ENCODE measurements at regions of chr1 and their contacts with region 1.

Region 1: GRCh38 chr1:226626577-226626956 is 78.0 kb downstream of the STUM start:
- DNase-seq: peak; percentile 89
- ATAC-seq: peak; percentile 90
- H3K4me3 Mint-ChIP-seq: peak overlapping the region; percentile 43
- H3K27ac Mint-ChIP-seq: peak overlapping the region; percentile 87
- H3K4me1 Mint-ChIP-seq: peaks cover 28% of the 10 kb centered on the region
- H3K27me3 Mint-ChIP-seq: no peaks in the 10 kb centered on the region
- CTCF ChIP-seq: peak; percentile 99

Region 2: DNA sequence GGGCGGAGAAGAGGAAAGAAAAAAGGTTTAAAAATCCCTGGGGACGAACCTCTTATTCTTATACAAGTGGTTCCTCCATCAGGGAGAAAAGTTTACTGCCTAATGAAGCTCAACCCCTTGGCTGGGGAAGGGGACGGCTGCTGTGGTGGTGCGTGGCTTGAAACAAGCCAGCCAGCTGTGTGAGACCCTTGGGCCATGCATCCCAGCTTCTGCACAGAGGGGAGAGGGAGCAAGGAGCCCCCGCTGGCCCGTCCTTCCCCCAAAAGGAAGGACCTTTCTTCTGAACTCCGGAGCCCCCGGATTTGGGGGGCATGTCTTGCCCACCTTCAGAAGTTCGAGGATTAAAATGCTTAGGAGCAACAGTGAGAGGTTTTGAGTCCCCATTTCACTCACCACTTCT is 10.7 kb before region 1 on chr1:
- CTCF ChIA-PET with region 1: interaction called, 10 read pairs
- POLR2A ChIA-PET with region 1: interaction called, 3 read pairs
- intact Hi-C with region 1: no loop called
- DNase-seq: no peak
- ATAC-seq: no peak
- H3K4me3 Mint-ChIP-seq: no peak overlapping the region
- H3K27ac Mint-ChIP-seq: no peak overlapping the region
- H3K4me1 Mint-ChIP-seq: no peaks in the 10 kb centered on the region
- H3K27me3 Mint-ChIP-seq: no peaks in the 10 kb centered on the region
- CTCF ChIP-seq: no peak

Region 3: DNA sequence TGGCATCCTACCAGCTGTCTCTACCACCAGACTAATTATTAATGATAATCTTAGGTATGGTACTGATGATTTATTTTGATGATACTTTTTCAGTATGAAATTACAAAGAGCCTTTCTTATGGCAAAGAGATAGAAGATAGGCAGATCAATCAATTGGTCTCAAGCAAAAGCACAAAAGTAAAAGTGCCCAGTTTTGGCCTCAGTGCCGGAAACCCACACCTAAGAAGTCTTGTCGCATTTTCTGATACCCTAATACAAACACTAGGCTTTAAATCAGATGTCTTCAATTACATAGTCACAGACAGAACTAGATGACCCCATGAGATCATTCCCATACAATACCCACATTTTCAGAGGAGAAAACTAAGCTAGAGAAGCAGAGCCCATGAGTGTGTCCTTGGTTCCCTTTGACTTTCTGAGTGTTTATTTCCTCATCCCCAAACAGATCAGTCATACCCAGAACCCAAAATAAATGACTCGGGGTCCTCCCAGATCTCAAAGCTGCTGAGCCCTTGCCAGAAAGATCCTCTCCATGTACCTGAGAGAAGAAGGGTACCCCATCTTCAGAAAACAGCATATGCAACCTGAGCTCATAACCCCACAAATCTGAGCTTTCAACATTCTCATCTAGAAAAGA is 104.8 kb after region 1 on chr1:
- CTCF ChIA-PET with region 1: interaction called, 11 read pairs
- POLR2A ChIA-PET with region 1: interaction called, 3 read pairs
- intact Hi-C with region 1: no loop called
- DNase-seq: no peak
- ATAC-seq: no peak
- H3K4me3 Mint-ChIP-seq: peak overlapping the region; percentile 92
- H3K27ac Mint-ChIP-seq: peak overlapping the region; percentile 95
- H3K4me1 Mint-ChIP-seq: peaks cover 67% of the 10 kb centered on the region
- H3K27me3 Mint-ChIP-seq: no peaks in the 10 kb centered on the region
- CTCF ChIP-seq: no peak

Region 4: GRCh38 chr1:226798427-226799411 is 172.2 kb after region 1 on chr1:
- CTCF ChIA-PET with region 1: interaction called, 11 read pairs
- POLR2A ChIA-PET with region 1: no interaction called
- intact Hi-C with region 1: no loop called
- DNase-seq: peak; percentile 88
- ATAC-seq: peak; percentile 81
- H3K4me3 Mint-ChIP-seq: peak overlapping the region; percentile 62
- H3K27ac Mint-ChIP-seq: peak overlapping the region; percentile 95
- H3K4me1 Mint-ChIP-seq: peaks cover 38% of the 10 kb centered on the region
- H3K27me3 Mint-ChIP-seq: peaks cover 1% of the 10 kb centered on the region
- CTCF ChIP-seq: no peak

Region 5: GRCh38 chr1:226882631-226883409 is 256.3 kb after region 1 on chr1:
- CTCF ChIA-PET with region 1: interaction called, 14 read pairs
- POLR2A ChIA-PET with region 1: interaction called, 4 read pairs
- intact Hi-C with region 1: no loop called
- DNase-seq: peak; percentile 53
- ATAC-seq: peak; percentile 92
- H3K4me3 Mint-ChIP-seq: peak overlapping the region; percentile 65
- H3K27ac Mint-ChIP-seq: peak overlapping the region; percentile 89
- H3K4me1 Mint-ChIP-seq: peaks cover 48% of the 10 kb centered on the region
- H3K27me3 Mint-ChIP-seq: no peaks in the 10 kb centered on the region
- CTCF ChIP-seq: no peak